Panc1 (cell line): ENCODE measurements at regions of chr4 and their contacts with region 1.

Region 1: GRCh38 chr4:21790438-21791029 is 158.0 kb downstream of the KCNIP4 start:
- DNase-seq: no peak
- ATAC-seq: no peak
- H3K4me3 ChIP-seq: no peak overlapping the region
- H3K27ac ChIP-seq: no peak overlapping the region
- H3K4me1 ChIP-seq: no peaks in the 10 kb centered on the region
- H3K27me3 ChIP-seq: no peaks in the 10 kb centered on the region
- CTCF ChIP-seq: peak; percentile 30; the same call in 1 of the 2 replicates

Region 2: GRCh38 chr4:22389240-22389870 is 598.8 kb after region 1 on chr4:
- CTCF ChIA-PET with region 1: interaction called, 12 read pairs
- POLR2A ChIA-PET with region 1: no interaction called
- in situ Hi-C with region 1: no loop called
- intact Hi-C with region 1: loop called (anchors 2 kb)
- DNase-seq: peak; percentile 32
- ATAC-seq: peak; percentile 56; the same call in 1 of the 2 replicates
- H3K4me3 ChIP-seq: no peak overlapping the region
- H3K27ac ChIP-seq: no peak overlapping the region
- H3K4me1 ChIP-seq: peaks cover 5% of the 10 kb centered on the region
- H3K27me3 ChIP-seq: no peaks in the 10 kb centered on the region
- CTCF ChIP-seq: peak; percentile 70

Region 3: DNA sequence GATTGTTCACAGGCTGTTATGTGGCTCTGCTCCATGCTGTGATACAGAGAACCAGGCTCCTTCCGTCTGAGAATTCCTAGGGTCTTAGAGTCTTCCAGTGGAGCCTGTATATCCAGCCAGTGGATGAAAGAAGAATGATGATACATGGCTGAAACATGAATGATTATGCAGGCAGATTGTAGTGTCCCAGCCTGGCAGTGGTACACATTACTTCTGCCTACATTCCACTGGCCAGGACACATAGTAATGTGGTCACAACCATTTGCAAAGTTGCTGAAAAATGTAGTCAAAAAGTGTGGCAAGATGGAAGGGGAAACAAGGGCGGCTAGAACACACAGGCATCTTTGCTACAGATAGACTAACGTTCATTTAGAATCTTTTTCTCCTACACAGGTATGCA is 897.7 kb after region 1 on chr4:
- CTCF ChIA-PET with region 1: no interaction called
- POLR2A ChIA-PET with region 1: no interaction called
- in situ Hi-C with region 1: no loop called
- intact Hi-C with region 1: loop called (anchors 2 kb)
- DNase-seq: no peak
- ATAC-seq: no peak
- H3K4me3 ChIP-seq: no peak overlapping the region
- H3K27ac ChIP-seq: no peak overlapping the region
- H3K4me1 ChIP-seq: no peaks in the 10 kb centered on the region
- H3K27me3 ChIP-seq: no peaks in the 10 kb centered on the region
- CTCF ChIP-seq: no peak